ENCODE measurements at regions of chr18 and their contacts with region 1.

Region 1: GRCh38 chr18:48049757-48050156 is 119.3 kb upstream of the SMAD2 start:
- DNase-seq: no peak
- H3K4me3 ChIP-seq: no peak overlapping the region
- CTCF ChIP-seq: no peak

Region 2: DNA sequence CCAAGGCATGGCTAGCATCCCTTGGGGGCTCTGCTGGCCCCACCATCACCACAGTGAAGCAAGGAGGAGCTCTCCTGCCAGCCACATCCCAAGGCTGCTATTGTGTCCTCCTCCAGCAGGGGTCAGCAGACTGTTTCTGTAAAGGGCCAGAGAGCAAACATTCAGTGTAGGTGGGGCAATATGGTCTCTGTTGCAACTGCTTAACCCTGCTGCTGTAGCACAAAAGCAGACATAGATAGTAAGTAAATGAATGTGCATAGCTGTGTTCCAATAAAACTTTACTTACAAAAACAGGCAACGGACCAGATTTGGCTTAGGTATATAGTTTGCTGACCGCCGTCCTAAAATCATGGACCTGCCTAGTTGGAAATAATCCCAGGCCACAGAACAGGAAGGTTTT is 395.8 kb after region 1 on chr18:
- in situ Hi-C with region 1: loop called (anchors 10 kb)
- DNase-seq: peak; percentile 45
- H3K4me3 ChIP-seq: no peak overlapping the region
- CTCF ChIP-seq: peak; percentile 96

Measured in astrocyte of the cerebellum (primary cell).